Activated CD4-positive, alpha-beta T cell treated with anti-CD3 and anti-CD28 coated beads for 36 hours (primary cell): ENCODE measurements at regions of chr20 and their contacts with region 1.

Region 1: DNA sequence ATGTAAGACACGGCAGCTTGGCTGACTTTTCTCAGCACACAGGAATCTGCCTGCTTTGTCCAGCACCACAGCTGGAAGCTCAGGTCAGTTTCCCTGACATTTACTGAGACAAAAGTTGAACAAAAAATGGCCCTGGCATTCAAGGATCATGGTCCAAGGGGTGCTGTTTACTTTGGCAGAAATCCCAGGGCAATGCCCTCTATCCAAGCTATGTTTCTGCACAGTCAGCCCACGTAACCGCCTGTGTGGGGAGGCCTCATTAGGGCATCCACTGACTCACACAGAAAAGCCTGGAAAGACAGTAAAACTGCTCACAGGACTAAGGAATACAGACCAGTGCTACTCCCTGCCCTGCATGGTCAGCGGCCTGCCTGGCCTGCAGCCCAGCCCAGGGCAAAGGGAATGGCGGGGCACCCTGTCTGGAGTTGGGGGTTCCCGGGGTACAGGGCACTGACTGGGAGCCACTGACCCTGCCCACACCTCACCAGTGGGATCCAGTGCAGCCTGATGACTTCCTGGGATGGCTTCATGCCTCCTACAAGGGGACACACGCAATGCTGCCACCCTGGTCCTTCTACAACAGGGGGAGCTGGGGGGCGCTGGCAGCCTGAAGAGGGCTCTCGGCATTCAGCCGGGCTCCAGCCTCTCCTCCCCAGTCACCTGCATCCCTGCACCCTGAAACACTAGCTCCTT is 77.1 kb downstream of the NINL start:
- DNase-seq: no peak
- ATAC-seq: no peak
- H3K4me3 Mint-ChIP-seq: no peak overlapping the region
- H3K27ac Mint-ChIP-seq: no peak overlapping the region
- H3K4me1 Mint-ChIP-seq: no peaks in the 10 kb centered on the region
- H3K27me3 Mint-ChIP-seq: no peaks in the 10 kb centered on the region

Region 2: DNA sequence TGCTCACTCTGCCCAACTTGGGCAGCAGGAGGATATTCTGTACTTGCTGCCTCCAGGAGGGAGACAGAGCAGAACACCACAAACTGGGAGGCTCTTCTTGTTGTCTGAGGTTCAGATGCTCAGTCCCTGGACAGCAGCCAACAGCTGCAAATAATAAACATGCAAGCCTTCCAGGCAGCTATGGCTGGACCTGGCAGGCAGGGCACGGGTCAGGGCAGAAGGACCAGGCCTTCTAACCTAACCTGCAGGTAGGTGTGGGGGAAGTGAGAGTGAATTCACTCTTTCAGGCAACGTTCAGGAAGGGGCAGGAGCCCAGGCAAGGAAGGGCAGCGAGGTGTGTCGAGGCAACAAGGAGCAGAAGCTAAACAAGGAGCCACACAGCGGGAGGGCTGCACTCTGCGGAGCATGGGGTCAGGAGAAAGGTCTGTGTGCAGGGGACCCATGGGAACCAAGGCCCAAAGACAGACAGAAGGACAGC is 45.6 kb after region 1 on chr20:
- CTCF ChIA-PET with region 1: no interaction called
- POLR2A ChIA-PET with region 1: no interaction called
- intact Hi-C with region 1: loop called in 1 of 2 experiments (anchors 10 kb)
- DNase-seq: no peak
- ATAC-seq: no peak
- H3K4me3 Mint-ChIP-seq: no peak overlapping the region
- H3K27ac Mint-ChIP-seq: no peak overlapping the region
- H3K4me1 Mint-ChIP-seq: no peaks in the 10 kb centered on the region
- H3K27me3 Mint-ChIP-seq: no peaks in the 10 kb centered on the region

Region 3: GRCh38 chr20:25574425-25574824 is 66.2 kb after region 1 on chr20:
- CTCF ChIA-PET with region 1: no interaction called
- POLR2A ChIA-PET with region 1: no interaction called
- intact Hi-C with region 1: loop called in 1 of 2 experiments (anchors 10 kb)
- DNase-seq: no peak
- ATAC-seq: no peak
- H3K4me3 Mint-ChIP-seq: no peak overlapping the region
- H3K27ac Mint-ChIP-seq: no peak overlapping the region
- H3K4me1 Mint-ChIP-seq: no peaks in the 10 kb centered on the region
- H3K27me3 Mint-ChIP-seq: no peaks in the 10 kb centered on the region